Activated T-helper 1 cell treated with anti-CD3 and anti-CD28 coated beads, Interleukin-12 subunit alpha, Interleukin-12 subunit beta, Interleukin-2, Interleukin-4 antibody, amounts not matched to agents 30 ng/mL and 10 ng/mL and 1 ng/mL, durations not matched to agents 14 hours and 24 hours and 36 hours (primary cell): ENCODE measurements at regions of chr19 and their contacts with region 1.

Region 1: GRCh38 chr19:58439576-58440554 is at the start of gene ZNF132:
- DNase-seq: peak; percentile 94
- H3K4me3 Mint-ChIP-seq: peak within 1 kb of the TSS; percentile 97
- H3K27ac Mint-ChIP-seq: peak within 1 kb of the TSS; percentile 98
- H3K4me1 Mint-ChIP-seq: peaks cover 24% of the 10 kb centered on the region
- H3K27me3 Mint-ChIP-seq: no peaks in the 10 kb centered on the region
- total RNA-seq, gene ZNF132: 3.4 and 3.5 TPM in 2 replicates

Region 2: DNA sequence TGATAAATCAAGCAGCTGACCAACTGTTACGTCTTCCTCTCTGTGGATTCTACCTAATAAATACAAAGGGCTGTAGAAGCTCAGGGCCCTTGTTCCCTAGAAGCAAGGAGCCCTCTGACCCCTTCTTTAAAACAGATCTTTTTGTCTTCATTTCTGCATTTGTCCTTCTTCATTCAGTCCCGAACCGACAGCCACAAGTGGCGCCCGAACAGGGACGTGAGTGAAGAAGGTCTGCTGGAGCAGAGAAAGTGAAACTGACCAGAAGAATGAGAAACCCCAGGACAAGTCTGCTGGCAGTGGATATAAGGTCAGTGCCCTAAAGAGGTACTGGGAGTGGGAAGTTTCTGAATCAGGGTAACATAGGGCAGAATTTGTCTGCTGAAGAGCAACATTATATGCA is 927.0 kb before region 1 on chr19:
- intact Hi-C with region 1: no loop called
- DNase-seq: no peak
- H3K4me3 Mint-ChIP-seq: no peak overlapping the region
- H3K27ac Mint-ChIP-seq: no peak overlapping the region
- H3K4me1 Mint-ChIP-seq: no peaks in the 10 kb centered on the region
- H3K27me3 Mint-ChIP-seq: no peaks in the 10 kb centered on the region

Region 3: GRCh38 chr19:58182989-58183816 is 256.7 kb before region 1 on chr19 and contains the start of gene ZNF274:
- intact Hi-C with region 1: loop called (anchors 1 kb)
- DNase-seq: peak; percentile 90
- H3K4me3 Mint-ChIP-seq: peak within 1 kb of the TSS; percentile 93
- H3K27ac Mint-ChIP-seq: peak within 1 kb of the TSS; percentile 99
- H3K4me1 Mint-ChIP-seq: peaks cover 16% of the 10 kb centered on the region
- H3K27me3 Mint-ChIP-seq: no peaks in the 10 kb centered on the region
- total RNA-seq, gene ZNF274: 18.2 and 21.2 TPM in 2 replicates

Region 4: DNA sequence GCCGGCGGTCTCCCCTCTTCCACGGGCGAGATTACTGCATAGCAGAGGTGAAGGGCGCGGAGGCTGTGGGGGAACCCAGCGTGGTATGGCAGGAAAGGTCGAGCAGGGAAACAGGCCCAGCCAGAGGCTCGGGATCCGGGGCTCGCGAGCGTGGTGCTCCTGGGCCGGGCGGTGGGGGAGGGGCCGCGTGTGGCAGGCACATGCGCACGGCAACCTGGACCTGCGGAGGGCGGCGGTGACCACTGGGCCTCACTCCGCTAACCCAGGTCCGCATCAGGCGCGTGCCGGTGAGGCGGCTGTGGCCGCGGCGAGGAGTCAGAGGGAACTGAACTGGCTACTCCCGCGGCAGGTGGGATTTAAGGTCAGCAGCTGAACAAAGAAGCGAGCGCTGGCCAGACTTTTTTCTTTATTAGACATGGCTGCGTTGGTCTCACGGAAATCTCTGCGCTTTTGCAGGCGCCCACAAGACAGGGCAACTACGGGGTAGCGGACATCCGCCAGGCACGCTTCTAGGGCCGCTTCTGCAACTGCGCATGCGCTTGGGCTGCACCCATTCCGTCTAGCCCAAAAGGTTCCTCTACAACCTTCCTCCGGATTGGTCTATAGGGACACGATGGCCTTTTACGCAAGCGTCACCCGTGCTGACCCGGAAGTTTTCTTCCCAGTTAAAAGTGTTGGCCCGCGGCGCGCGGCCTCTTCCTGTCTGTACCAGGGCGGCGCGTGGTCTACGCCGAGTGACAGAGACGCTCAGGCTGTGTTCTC is 53.1 kb before region 1 on chr19 and contains the start of gene RPS5:
- intact Hi-C with region 1: loop called (anchors 1 kb)
- DNase-seq: peak; percentile 95
- H3K4me3 Mint-ChIP-seq: peak within 1 kb of the TSS; percentile 93
- H3K27ac Mint-ChIP-seq: peak within 1 kb of the TSS; percentile 99
- H3K4me1 Mint-ChIP-seq: peaks cover 35% of the 10 kb centered on the region
- H3K27me3 Mint-ChIP-seq: no peaks in the 10 kb centered on the region
- total RNA-seq, gene RPS5: 1,157 and 1,161 TPM in 2 replicates

Region 5: DNA sequence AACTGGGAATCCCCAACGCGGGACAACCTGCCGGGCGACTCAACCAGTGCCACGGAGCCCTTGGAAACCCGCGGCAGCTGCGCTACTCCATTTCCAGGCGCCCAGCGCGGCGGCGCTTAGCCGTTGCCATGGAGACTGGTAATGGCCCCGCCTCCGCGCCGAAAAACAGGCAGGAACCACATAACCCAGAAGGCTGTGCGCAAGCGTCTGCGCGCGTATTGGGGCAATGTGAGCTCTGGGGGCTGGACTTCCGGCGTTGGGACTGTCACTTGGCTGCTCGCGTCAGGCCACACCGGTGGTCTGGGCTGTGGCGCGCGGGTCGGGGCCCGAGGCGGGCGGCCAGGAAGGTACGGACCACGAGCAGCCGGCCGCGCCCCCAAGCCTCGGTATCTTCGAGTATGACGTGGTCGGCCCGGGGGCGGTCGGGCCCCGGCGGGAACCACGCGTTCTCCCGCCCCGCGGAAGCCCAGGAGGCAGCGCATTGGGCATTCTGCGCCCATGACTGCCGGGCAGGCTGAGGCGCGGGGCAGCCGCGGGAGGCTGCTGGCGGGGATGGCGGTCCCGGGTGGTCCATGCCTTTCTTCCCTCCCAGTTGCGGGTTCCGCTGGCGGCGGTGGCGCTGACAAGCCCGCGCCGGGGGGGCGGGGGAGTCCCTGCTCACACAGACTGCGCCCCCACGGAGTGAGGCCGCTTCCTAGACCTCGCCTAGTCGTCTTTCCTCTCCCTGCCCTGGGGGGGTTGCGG is 11.7 kb after region 1 on chr19 and contains the start of gene ZNF324B:
- intact Hi-C with region 1: loop called (anchors 1 kb)
- DNase-seq: peak; percentile 95
- H3K4me3 Mint-ChIP-seq: peak within 1 kb of the TSS; percentile 85
- H3K27ac Mint-ChIP-seq: peak within 1 kb of the TSS; percentile 48
- H3K4me1 Mint-ChIP-seq: peaks cover 18% of the 10 kb centered on the region
- H3K27me3 Mint-ChIP-seq: peaks cover 7% of the 10 kb centered on the region
- total RNA-seq, gene ZNF324B: 14.3 and 15.1 TPM in 2 replicates

Region 6: DNA sequence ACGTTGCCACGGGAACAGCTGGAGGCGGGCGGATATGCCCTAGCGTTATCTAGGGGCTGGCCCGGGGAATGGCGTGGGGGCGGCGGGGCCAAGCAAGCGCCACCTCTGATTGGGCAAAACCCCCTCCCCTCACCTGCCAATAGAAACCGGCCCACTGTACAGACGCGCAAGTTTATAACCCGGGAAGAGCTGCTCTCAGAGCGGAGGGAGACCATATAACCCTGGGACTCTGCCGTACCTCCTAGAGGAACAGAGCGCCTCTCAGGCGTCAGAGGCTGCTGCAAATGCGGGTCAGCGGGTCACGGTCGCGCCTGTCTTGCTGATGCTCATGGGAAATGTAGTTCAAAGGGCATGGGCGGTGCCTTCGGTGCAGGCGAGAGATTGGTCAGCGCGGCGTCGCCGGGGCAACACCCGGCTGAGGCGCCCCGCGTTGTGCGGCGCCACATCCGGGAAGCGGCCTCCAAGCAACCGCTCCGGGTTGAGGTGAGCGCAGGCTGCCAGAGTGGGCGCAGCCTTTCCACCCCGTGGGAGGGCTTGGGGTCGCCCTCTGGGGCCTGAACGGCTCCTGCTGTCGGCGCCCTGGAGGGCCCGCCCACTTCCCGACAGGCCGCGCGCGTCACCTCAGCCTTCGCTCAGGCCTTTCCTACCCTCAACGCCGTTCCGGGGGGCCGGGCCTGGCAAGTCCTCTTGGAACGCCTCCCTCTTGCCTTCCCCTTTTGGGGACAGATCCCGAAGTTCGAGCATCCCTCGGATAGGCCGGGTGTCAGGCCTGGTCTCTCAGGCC is 36.0 kb after region 1 on chr19 and contains the start of gene ZNF446:
- intact Hi-C with region 1: loop called (anchors 1 kb)
- DNase-seq: peak; percentile 95
- H3K4me3 Mint-ChIP-seq: peak within 1 kb of the TSS; percentile 88
- H3K27ac Mint-ChIP-seq: peak within 1 kb of the TSS; percentile 99
- H3K4me1 Mint-ChIP-seq: peaks cover 25% of the 10 kb centered on the region
- H3K27me3 Mint-ChIP-seq: no peaks in the 10 kb centered on the region
- total RNA-seq, gene ZNF446: 6.6 and 6.7 TPM in 2 replicates

Region 7: GRCh38 chr19:58572818-58573657 is 133.2 kb after region 1 on chr19 and contains the start of gene MZF1:
- intact Hi-C with region 1: loop called (anchors 1 kb)
- DNase-seq: peak; percentile 100
- H3K4me3 Mint-ChIP-seq: peak within 1 kb of the TSS; percentile 95
- H3K27ac Mint-ChIP-seq: peak within 1 kb of the TSS; percentile 99
- H3K4me1 Mint-ChIP-seq: peaks cover 41% of the 10 kb centered on the region
- H3K27me3 Mint-ChIP-seq: no peaks in the 10 kb centered on the region
- total RNA-seq, gene MZF1: 19.6 and 21.6 TPM in 2 replicates